ENCODE measurements at regions of chr2 and their contacts with region 1.

Region 1: DNA sequence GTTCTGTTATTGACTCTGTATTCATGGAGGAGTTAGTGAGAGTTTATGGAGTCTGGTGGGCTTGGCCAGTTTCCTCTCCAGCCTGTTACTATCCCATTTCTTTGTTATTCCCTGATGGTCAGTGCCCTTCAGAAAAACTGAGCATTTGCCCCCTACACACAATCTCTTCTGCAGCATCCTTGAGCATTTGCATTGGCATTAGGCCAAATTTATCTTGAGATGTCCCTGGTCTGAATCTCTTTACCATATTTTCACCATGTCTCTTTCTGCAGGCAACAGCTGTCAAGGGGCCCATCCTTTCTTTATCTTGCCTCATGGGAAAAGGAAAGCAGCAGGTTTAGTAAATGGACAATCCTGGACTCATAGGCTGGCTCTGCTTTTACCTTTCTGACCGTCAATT is 221.5 kb upstream of the NT5C1B start:
- DNase-seq: no peak
- H3K4me3 ChIP-seq: no peak overlapping the region
- H3K27ac ChIP-seq: no peak overlapping the region
- H3K4me1 ChIP-seq: no peaks in the 10 kb centered on the region
- H3K27me3 ChIP-seq: no peaks in the 10 kb centered on the region
- CTCF ChIP-seq: no peak
- POLR2A ChIP-seq: no peak

Region 2: DNA sequence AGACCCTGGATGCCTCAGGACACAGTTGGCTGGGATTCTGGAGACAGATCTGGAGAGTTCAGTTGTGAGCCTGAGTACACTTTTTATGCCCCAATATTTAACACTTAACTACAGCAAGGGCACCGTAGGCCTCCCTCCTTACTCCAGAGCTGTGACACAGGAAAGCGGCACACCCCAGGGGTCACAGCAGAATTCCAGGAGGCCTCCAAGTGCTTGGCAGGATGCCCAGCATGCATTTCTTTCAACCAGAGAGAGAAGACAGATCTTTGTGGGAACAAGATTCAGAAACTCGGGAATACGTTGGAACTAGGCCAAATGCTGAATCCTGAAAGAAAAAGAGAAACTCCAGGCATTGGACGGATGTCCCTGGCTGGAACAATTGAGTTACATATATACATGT is 22.3 kb before region 1 on chr2:
- intact Hi-C with region 1: loop called (anchors 1 kb)
- DNase-seq: no peak
- H3K4me3 ChIP-seq: no peak overlapping the region
- H3K27ac ChIP-seq: no peak overlapping the region
- H3K4me1 ChIP-seq: peaks cover 8% of the 10 kb centered on the region
- H3K27me3 ChIP-seq: no peaks in the 10 kb centered on the region
- CTCF ChIP-seq: no peak
- POLR2A ChIP-seq: no peak